ENCODE measurements at regions of chr17 and their contacts with region 1.

Region 1: DNA sequence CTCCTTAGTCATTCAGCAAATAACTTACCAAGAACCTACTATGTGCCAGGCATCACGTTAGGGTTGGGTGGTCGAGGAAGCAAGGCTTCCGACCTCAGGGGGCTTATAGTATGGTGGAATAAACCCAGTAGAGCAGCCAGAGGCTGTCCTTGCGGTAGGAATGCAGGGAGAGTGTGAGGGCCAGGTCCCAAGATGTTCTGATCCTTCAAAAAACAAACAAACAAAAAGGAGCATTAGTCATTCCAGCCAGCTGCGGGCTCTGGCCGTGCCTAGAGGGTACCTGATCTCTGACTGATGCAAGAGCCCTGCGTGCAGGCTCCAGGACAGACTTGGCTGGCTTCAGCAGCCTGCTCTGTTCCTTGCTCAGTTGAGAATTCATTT is 18.2 kb downstream of the CYB5D2 start:
- DNase-seq: peak; percentile 90
- H3K27ac ChIP-seq: peak overlapping the region; percentile 98
- CTCF ChIP-seq: no peak

Region 2: GRCh38 chr17:4143563-4144421 is 17.4 kb before region 1 on chr17:
- CTCF ChIA-PET with region 1: interaction called, 8 read pairs
- POLR2A ChIA-PET with region 1: interaction called, 15 read pairs
- DNase-seq: peak; percentile 87
- H3K27ac ChIP-seq: peak overlapping the region; percentile 98
- CTCF ChIP-seq: no peak

Measured in RWPE1 (cell line).